Posterior vena cava (tissue), 2 donors: ENCODE measurements at regions of chr9 and their contacts with region 1.

Region 1: DNA sequence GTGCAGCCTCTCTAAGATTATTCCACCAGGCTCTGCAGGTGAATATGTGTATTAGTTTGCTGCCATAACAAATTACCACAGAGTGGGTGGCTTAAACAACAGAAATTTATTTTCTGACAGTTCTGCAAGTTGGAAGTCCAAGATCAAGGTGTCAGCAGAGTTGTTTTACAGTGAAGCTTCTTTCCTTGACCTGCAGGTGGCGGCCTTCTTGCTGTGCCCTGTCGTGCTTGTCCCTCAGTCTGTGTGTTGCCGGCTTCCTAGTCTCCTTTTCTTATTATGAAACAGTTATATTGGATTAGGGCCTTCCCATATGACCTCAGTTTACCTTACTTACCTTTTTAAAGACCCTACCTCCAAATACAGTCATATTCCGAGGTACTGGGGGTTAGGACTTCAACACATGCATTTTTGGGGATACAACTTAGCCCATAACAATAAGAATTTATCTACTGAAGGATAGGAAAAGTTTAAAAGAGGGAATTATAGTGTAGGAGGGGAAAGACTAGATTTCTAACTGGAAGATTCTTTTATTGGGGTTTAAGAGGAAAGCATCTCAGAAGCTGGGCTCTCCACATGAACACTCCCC is 97.4 kb downstream of the OSTF1 start:
- DNase-seq: no peak

Region 2: GRCh38 chr9:75001719-75002422 is 183.8 kb before region 1 on chr9:
- intact Hi-C with region 1: no loop called
- DNase-seq: no peak

Region 3: GRCh38 chr9:76302947-76303940 is 1117.6 kb after region 1 on chr9:
- intact Hi-C with region 1: loop called in 1 of 2 experiments (anchors 5 kb)
- DNase-seq: no peak